ENCODE measurements at regions of chr9 and their contacts with region 1.

Region 1: DNA sequence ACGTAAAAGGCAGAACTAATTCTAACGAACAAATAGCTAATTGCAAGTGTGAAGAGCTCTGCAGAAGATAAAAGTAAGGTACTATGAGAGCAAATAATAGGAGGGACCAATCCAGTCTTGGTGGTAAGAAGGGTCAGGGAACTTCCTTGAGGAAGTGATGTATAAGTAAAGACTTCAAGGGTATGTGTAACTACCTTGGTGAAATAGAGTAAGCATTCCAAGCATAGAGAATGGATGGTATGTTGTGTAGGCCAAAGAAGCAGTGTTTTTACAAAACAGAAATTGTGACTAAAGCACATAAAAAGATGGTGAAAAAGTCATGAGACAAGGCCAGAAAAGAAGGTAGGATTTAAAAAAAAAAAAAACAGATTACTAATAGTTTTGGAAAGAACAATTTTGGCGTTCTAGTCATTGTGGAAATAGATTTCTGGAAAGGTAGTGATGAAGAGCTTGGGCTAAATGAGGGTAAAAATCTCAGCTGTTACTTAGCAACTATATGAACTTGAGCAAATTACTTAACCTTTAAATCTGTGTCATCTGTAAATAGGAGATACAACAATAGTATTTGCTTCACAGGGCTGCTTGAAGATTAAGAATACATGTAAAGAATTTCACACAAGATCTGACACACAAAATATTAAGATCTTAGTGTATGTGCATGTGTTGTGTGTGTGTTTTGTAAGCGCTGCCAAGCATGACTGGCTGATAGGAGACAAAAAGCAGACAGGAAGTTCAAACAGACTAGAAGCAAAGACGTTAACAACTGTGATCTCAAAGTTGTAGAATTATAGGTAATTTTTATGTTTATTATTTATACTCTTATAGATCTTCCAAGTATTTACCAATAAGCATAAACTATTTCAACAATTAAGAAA is 73.5 kb downstream of the NR6A1 start:
- DNase-seq: peak in 1 of 2 experiments; percentile 81
- H3K4me3 ChIP-seq: no peak overlapping the region
- H3K27ac ChIP-seq: peak overlapping the region; percentile 81
- H3K4me1 ChIP-seq: peaks cover 58% of the 10 kb centered on the region
- H3K27me3 ChIP-seq: no peaks in the 10 kb centered on the region
- CTCF ChIP-seq: no peak

Region 2: DNA sequence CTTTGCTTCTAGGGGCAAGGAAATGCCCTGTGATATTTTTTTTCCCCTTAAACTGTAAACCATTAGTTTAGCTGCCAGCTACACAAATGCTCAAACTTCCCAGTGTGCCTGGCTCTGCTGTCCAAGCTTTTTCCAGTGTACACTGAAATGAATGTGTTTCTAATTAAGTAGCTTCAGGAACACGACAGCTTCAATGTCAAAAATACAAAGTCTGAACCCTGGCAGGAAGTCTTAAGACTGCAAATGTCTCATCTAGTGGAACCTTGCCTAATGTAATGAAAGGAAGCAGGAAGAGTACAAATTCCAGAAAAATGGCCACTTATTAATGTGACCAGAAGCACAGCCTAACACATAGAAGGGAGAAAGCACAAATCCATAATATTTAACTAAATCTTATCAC is 1086.3 kb before region 1 on chr9:
- CTCF ChIA-PET with region 1: no interaction called
- POLR2A ChIA-PET with region 1: no interaction called
- intact Hi-C with region 1: no loop called
- DNase-seq: no peak
- H3K4me3 ChIP-seq: no peak overlapping the region
- H3K27ac ChIP-seq: no peak overlapping the region
- H3K4me1 ChIP-seq: no peaks in the 10 kb centered on the region
- H3K27me3 ChIP-seq: no peaks in the 10 kb centered on the region
- CTCF ChIP-seq: no peak

Region 3: GRCh38 chr9:123974471-123974870 is 723.1 kb before region 1 on chr9:
- CTCF ChIA-PET with region 1: no interaction called
- POLR2A ChIA-PET with region 1: interaction called, 19 read pairs
- intact Hi-C with region 1: no loop called
- DNase-seq: no peak
- H3K4me3 ChIP-seq: no peak overlapping the region
- H3K27ac ChIP-seq: no peak overlapping the region
- H3K4me1 ChIP-seq: no peaks in the 10 kb centered on the region
- H3K27me3 ChIP-seq: peaks cover 52% of the 10 kb centered on the region
- CTCF ChIP-seq: no peak

Region 4: GRCh38 chr9:124285903-124286291 is 411.7 kb before region 1 on chr9:
- CTCF ChIA-PET with region 1: no interaction called
- POLR2A ChIA-PET with region 1: no interaction called
- intact Hi-C with region 1: no loop called
- DNase-seq: no peak
- H3K4me3 ChIP-seq: no peak overlapping the region
- H3K27ac ChIP-seq: no peak overlapping the region
- H3K4me1 ChIP-seq: no peaks in the 10 kb centered on the region
- H3K27me3 ChIP-seq: no peaks in the 10 kb centered on the region
- CTCF ChIP-seq: no peak

Region 5: GRCh38 chr9:124665391-124666058 is 32.0 kb before region 1 on chr9:
- CTCF ChIA-PET with region 1: interaction called, 3 read pairs
- POLR2A ChIA-PET with region 1: interaction called, 13 read pairs
- intact Hi-C with region 1: no loop called
- DNase-seq: peak in 1 of 2 experiments; percentile 63
- H3K4me3 ChIP-seq: no peak overlapping the region
- H3K27ac ChIP-seq: no peak overlapping the region
- H3K4me1 ChIP-seq: peaks cover 27% of the 10 kb centered on the region
- H3K27me3 ChIP-seq: no peaks in the 10 kb centered on the region
- CTCF ChIP-seq: no peak